ENCODE measurements at regions of chr6 and their contacts with region 1.

Region 1: DNA sequence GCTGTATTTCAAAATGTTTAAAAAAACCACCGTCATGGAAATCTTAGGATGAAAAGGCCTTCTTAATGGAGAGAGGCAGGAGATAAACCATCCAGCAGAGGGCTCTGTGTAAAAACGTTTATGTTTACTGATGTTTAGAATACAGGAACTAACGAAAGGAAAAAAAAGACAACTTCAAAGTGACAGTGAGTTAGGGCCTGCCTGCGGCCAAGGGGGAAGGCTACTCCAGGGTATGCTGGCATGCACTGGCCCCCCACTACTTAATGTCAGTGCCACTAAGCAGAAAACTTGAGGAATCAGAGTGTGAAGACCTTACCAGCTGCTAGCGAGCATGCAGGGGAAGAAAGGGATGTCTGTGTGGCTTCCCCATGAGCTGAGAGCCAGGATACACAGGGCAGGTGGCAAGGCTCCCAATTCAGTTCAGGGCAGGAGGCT is 47.7 kb downstream of the AKAP7 start:
- DNase-seq: no peak
- H3K4me3 ChIP-seq: no peak overlapping the region
- H3K27ac ChIP-seq: no peak overlapping the region
- H3K4me1 ChIP-seq: peaks cover 0 to 5% (median 0%) of the 10 kb centered on the region in 4 donors
- H3K27me3 ChIP-seq: no peaks in the 10 kb centered on the region
- CTCF ChIP-seq: peak in 4 of 5 experiments; percentile 37 to 53 (median 46)
- EP300 ChIP-seq: no peak
- POLR2A ChIP-seq: no peak

Region 2: GRCh38 chr6:131213501-131213990 is 30.5 kb after region 1 on chr6:
- in situ Hi-C with region 1: no loop called
- intact Hi-C with region 1: no loop called
- DNase-seq: no peak
- H3K4me3 ChIP-seq: no peak overlapping the region
- H3K27ac ChIP-seq: peak overlapping the region in 1 of 4 donors; percentile 10
- H3K4me1 ChIP-seq: no peaks in the 10 kb centered on the region
- H3K27me3 ChIP-seq: no peaks in the 10 kb centered on the region
- CTCF ChIP-seq: no peak
- EP300 ChIP-seq: no peak
- POLR2A ChIP-seq: no peak

Region 3: GRCh38 chr6:131519670-131520436 is 336.8 kb after region 1 on chr6:
- in situ Hi-C with region 1: loop called in 2 of 4 experiments (anchors 10 to 25 kb)
- intact Hi-C with region 1: no loop called
- DNase-seq: peak; percentile 19
- H3K4me3 ChIP-seq: no peak overlapping the region
- H3K27ac ChIP-seq: no peak overlapping the region
- H3K4me1 ChIP-seq: no peaks in the 10 kb centered on the region
- H3K27me3 ChIP-seq: no peaks in the 10 kb centered on the region
- CTCF ChIP-seq: peak; percentile 31 to 54 (median 51)
- EP300 ChIP-seq: no peak
- POLR2A ChIP-seq: no peak

Region 4: DNA sequence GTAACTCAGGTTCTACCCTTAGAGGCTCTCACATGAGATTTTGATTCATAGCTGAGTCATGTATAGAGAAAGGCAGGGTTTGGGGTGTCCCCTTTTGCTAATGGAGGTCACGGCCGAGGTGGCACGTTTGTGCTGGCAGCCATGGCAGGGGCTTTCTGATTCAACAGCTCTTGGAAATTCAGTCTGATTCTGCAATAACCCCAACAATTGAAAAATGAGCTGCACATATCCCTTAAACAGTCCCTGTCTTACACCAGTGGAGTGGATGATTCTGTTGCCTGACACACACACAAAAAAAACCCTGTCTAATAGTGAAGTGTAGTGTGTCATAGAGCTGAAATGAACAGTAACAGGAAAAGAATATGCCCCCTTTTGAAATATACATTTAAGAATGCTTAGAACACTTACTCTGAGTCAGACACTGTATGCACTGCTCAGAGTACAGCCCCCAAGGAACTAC is 349.6 kb after region 1 on chr6:
- in situ Hi-C with region 1: loop called (anchors 10 to 25 kb)
- intact Hi-C with region 1: no loop called
- DNase-seq: no peak
- H3K4me3 ChIP-seq: no peak overlapping the region
- H3K27ac ChIP-seq: no peak overlapping the region
- H3K4me1 ChIP-seq: peaks cover 0 to 7% (median 0%) of the 10 kb centered on the region in 4 donors
- H3K27me3 ChIP-seq: no peaks in the 10 kb centered on the region
- CTCF ChIP-seq: no peak
- EP300 ChIP-seq: no peak
- POLR2A ChIP-seq: no peak

Measured in transverse colon (tissue), 4 donors.